H1 (cell line): ENCODE measurements at regions of chr1 and their contacts with region 1.

Region 1: GRCh38 chr1:29415156-29415830 is 179.0 kb downstream of the PTPRU start:
- DNase-seq: peak in 1 of 2 experiments; percentile 52
- H3K4me3 ChIP-seq: no peak overlapping the region
- H3K27ac ChIP-seq: no peak overlapping the region
- H3K4me1 ChIP-seq: peaks cover 0 to 5% (median 0%) of the 10 kb centered on the region in 4 experiments; a peak in 2 of 7 replicates
- H3K27me3 ChIP-seq: no peaks in the 10 kb centered on the region
- CTCF ChIP-seq: peak; percentile 45 to 58 (median 46)
- EP300 ChIP-seq: no peak
- POLR2A ChIP-seq: no peak
- RAD21 ChIP-seq: peak; percentile 64 to 75

Region 2: GRCh38 chr1:29332204-29332603 is 83.1 kb before region 1 on chr1:
- CTCF ChIA-PET with region 1: interaction called, 18 read pairs
- POLR2A ChIA-PET with region 1: no interaction called
- DNase-seq: peak; percentile 49 to 86
- H3K4me3 ChIP-seq: no peak overlapping the region
- H3K27ac ChIP-seq: no peak overlapping the region
- H3K4me1 ChIP-seq: 0 out of 7 replicates have a peak, but pooled peaks cover 0 to 2% (median 0%) of the 10 kb centered on the region in 4 experiments
- H3K27me3 ChIP-seq: no peaks in the 10 kb centered on the region
- CTCF ChIP-seq: peak; percentile 74 to 95 (median 86)
- EP300 ChIP-seq: no peak
- POLR2A ChIP-seq: no peak
- RAD21 ChIP-seq: peak; percentile 89 to 92

Region 3: GRCh38 chr1:29390491-29391361 is 24.6 kb before region 1 on chr1:
- CTCF ChIA-PET with region 1: interaction called, 14 read pairs
- POLR2A ChIA-PET with region 1: no interaction called
- DNase-seq: peak in 1 of 2 experiments; percentile 38
- H3K4me3 ChIP-seq: no peak overlapping the region
- H3K27ac ChIP-seq: no peak overlapping the region
- H3K4me1 ChIP-seq: no peaks in the 10 kb centered on the region
- H3K27me3 ChIP-seq: no peaks in the 10 kb centered on the region
- CTCF ChIP-seq: no peak
- EP300 ChIP-seq: no peak
- POLR2A ChIP-seq: no peak
- RAD21 ChIP-seq: no peak

Region 4: DNA sequence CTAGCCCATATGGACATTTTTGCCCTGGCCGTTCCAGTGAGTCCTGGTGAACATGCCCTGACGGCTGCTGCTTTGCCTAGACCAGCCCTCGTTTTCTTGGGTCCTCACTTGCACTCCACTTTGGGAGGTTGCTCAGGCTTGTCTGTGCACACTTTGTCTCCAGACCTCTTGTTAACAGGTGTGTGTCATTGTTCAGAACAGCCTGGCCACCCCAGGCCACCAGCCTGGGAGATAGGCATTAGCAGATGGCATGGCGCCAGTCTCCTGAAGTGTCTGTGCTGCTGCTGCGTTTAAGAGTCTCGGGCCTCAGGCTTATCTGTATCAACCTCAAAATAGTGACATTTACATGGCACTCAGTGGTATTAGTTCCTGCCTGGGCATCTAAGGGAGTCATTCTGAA is 11.5 kb after region 1 on chr1:
- CTCF ChIA-PET with region 1: interaction called, 21 read pairs
- POLR2A ChIA-PET with region 1: no interaction called
- DNase-seq: peak in 1 of 2 experiments; percentile 16
- H3K4me3 ChIP-seq: no peak overlapping the region
- H3K27ac ChIP-seq: no peak overlapping the region
- H3K4me1 ChIP-seq: peaks cover 3 to 6% (median 5%) of the 10 kb centered on the region in 4 experiments; a peak in 4 of 7 replicates
- H3K27me3 ChIP-seq: no peaks in the 10 kb centered on the region
- CTCF ChIP-seq: no peak
- EP300 ChIP-seq: no peak
- POLR2A ChIP-seq: no peak
- RAD21 ChIP-seq: no peak

Region 5: GRCh38 chr1:29444782-29445729 is 29.8 kb after region 1 on chr1:
- CTCF ChIA-PET with region 1: interaction called, 12 read pairs
- POLR2A ChIA-PET with region 1: no interaction called
- DNase-seq: no peak
- H3K4me3 ChIP-seq: no peak overlapping the region
- H3K27ac ChIP-seq: no peak overlapping the region
- H3K4me1 ChIP-seq: peaks cover 0 to 14% (median 8%) of the 10 kb centered on the region in 4 experiments; a peak in 6 of 7 replicates
- H3K27me3 ChIP-seq: no peaks in the 10 kb centered on the region
- CTCF ChIP-seq: no peak
- EP300 ChIP-seq: no peak
- POLR2A ChIP-seq: no peak
- RAD21 ChIP-seq: no peak